ENCODE measurements at regions of chr1 and their contacts with region 1.

Region 1: GRCh38 chr1:28248283-28249012 is 10.9 kb upstream of the SESN2 start:
- DNase-seq: peak; percentile 80
- ATAC-seq: peak; percentile 53
- H3K4me3 ChIP-seq: peak overlapping the region; percentile 16; the same call in 1 of the 2 replicates
- H3K27ac ChIP-seq: peak overlapping the region; percentile 68; the same call in 1 of the 2 replicates
- H3K4me1 ChIP-seq: peaks cover 14% of the 10 kb centered on the region
- H3K27me3 ChIP-seq: no peaks in the 10 kb centered on the region; the same call in 1 of the 2 replicates
- CTCF ChIP-seq: peak; percentile 90
- POLR2A ChIP-seq: no peak
- RAD21 ChIP-seq: peak; percentile 88

Region 2: DNA sequence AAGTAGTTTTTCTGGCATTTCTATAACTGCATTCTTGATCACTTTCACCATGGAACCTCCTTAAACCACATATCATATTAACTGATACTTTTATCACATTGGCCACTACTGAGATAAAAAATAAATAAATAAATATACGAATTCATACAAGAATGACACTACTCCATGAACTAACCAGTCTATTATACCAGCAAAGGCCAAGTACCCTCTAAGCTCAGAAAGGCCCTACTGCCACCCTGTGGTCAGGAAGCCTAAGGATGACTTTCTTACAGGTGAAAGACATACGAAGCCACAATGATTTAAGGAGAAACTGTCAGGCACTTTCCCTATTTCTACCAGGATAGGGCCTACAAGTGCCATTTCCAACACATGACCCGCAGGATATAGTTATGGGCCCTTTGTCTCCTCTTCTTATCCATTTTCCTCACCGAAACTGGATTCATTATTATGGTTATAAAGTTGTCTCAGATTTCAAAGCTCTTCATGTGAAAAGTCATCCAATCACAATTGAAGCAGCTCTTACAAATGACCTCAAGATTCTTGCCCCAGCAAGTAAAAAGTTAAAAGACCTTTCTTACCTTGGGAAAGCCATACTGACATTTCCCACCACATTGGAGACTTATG is 39.5 kb before region 1 on chr1:
- CTCF ChIA-PET with region 1: no interaction called
- POLR2A ChIA-PET with region 1: no interaction called
- dilution Hi-C with region 1: no loop called
- in situ Hi-C with region 1: no loop called
- intact Hi-C with region 1: no loop called
- DNase-seq: peak; percentile 76
- ATAC-seq: peak; percentile 97
- H3K4me3 ChIP-seq: no peak overlapping the region
- H3K27ac ChIP-seq: no peak overlapping the region
- H3K4me1 ChIP-seq: no peaks in the 10 kb centered on the region
- H3K27me3 ChIP-seq: no peaks in the 10 kb centered on the region
- CTCF ChIP-seq: peak; percentile 84
- POLR2A ChIP-seq: no peak
- RAD21 ChIP-seq: peak; percentile 97

Region 3: DNA sequence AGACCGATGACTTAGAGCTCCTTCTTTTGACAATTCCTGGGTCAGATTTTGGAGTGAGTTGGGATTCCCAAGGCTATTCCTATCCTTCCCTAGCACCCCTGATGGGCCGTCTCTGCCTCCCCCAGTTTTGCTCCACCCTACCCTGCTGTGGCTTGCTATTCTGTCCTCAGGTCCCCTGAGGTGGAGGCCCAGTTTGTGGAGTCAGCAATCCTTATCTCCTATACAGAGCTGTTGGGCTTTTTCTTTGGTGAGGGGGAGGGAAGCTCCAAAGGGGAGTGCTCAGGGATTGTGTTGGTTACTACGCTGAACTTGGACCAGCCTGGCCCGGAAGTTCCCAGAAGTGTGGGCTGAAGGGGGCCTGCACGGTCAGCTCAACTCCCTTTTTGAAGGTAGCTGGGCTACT is 18.5 kb after region 1 on chr1:
- CTCF ChIA-PET with region 1: interaction called, 14 read pairs
- POLR2A ChIA-PET with region 1: no interaction called
- dilution Hi-C with region 1: no loop called
- in situ Hi-C with region 1: no loop called
- intact Hi-C with region 1: no loop called
- DNase-seq: no peak
- ATAC-seq: no peak
- H3K4me3 ChIP-seq: no peak overlapping the region
- H3K27ac ChIP-seq: no peak overlapping the region
- H3K4me1 ChIP-seq: peaks cover 16% of the 10 kb centered on the region
- H3K27me3 ChIP-seq: no peaks in the 10 kb centered on the region
- CTCF ChIP-seq: no peak
- POLR2A ChIP-seq: no peak
- RAD21 ChIP-seq: no peak

Region 4: DNA sequence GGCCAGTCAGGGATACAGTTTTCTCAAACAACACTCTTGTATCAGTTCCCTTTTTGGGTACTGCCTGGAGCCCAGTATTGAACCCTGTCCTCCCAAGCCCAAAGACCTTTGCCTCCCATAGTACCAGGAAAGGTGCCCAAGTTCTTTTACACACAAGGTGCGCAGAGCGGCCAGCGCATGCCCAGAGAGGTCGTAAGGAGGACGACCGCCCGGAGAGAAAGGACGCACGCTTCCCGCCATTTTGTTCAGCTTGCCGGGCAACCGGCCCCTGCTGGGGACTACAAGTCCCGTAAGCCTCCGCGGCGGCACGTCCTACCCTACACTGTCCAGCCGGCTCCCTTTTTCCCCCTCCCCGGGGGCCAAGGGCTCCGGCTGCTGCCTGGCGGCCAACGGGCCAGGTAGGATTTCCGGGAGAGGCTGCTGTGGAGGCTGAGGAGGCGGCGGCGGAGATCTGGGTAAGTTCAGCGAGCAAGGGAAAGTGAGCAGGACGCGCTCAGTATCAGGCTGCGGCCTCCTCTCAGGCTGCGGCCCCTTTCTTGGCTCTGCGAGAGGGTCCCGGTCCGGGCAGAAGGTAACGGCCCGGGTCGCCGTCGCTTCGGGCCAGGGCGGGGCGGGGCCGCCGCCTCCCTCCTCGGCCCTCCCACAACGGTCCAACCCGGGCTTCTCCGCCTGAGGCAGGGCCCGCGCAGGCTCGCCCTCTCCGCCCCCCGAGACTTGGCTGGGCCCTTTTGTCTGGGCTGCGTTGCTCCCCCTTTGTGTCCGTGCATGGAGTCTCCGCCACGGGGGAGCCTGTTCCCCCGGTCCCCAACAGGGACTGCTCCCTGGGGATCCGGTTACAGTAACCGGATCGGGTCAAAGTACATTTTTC is 121.2 kb after region 1 on chr1 and contains the start of gene PHACTR4:
- CTCF ChIA-PET with region 1: no interaction called
- POLR2A ChIA-PET with region 1: no interaction called
- dilution Hi-C with region 1: no loop called
- in situ Hi-C with region 1: no loop called
- intact Hi-C with region 1: loop called (anchors 2 kb)
- DNase-seq: peak; percentile 91
- ATAC-seq: peak; percentile 95
- H3K4me3 ChIP-seq: peak within 1 kb of the TSS; percentile 66
- H3K27ac ChIP-seq: peak within 1 kb of the TSS; percentile 93
- H3K4me1 ChIP-seq: 0 out of 2 replicates have a peak, but pooled peaks cover 5% of the 10 kb centered on the region
- H3K27me3 ChIP-seq: no peaks in the 10 kb centered on the region
- CTCF ChIP-seq: no peak
- POLR2A ChIP-seq: peak; percentile 76; the same call in 1 of the 2 replicates
- RAD21 ChIP-seq: no peak
- total RNA-seq, gene PHACTR4: 6.9 and 7.5 TPM in 2 replicates

Region 5: DNA sequence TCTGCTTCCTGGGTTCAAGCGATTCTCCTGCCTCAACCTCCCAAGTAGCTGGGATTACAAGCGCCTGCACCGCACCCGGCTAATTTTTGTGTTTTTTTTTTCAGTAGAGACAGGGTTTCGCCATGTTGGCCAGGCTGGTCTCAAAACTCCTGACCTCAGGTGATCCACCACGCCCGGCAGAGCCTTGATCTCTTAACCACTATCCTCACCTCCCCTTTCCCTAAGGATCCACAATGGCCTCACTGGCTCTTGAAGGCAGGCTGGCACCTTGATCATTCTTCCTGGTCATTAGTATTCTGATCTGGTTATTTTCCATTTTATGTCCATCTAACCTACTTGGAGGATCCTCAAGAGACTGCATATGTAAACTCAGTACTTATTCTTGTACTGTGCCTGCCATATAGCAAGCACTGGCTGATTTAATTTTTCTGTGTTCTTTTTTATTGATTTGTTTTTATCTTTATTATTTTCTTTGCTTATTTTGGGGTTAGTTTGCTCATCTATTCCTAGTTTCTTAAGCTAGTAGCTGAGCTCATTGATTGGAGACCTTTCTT is 263.7 kb after region 1 on chr1:
- CTCF ChIA-PET with region 1: interaction called, 4 read pairs
- POLR2A ChIA-PET with region 1: interaction called, 10 read pairs
- dilution Hi-C with region 1: no loop called
- in situ Hi-C with region 1: no loop called
- intact Hi-C with region 1: no loop called
- DNase-seq: peak; percentile 37
- ATAC-seq: no peak
- H3K4me3 ChIP-seq: no peak overlapping the region
- H3K27ac ChIP-seq: no peak overlapping the region
- H3K4me1 ChIP-seq: peaks cover 13% of the 10 kb centered on the region
- H3K27me3 ChIP-seq: no peaks in the 10 kb centered on the region
- CTCF ChIP-seq: no peak
- POLR2A ChIP-seq: peak; percentile 1; the same call in 1 of the 2 replicates
- RAD21 ChIP-seq: no peak

Region 6: GRCh38 chr1:28703629-28704028 is 455.2 kb after region 1 on chr1:
- CTCF ChIA-PET with region 1: no interaction called
- POLR2A ChIA-PET with region 1: no interaction called
- dilution Hi-C with region 1: no loop called
- in situ Hi-C with region 1: no loop called
- intact Hi-C with region 1: no loop called
- DNase-seq: no peak
- ATAC-seq: no peak
- H3K4me3 ChIP-seq: no peak overlapping the region
- H3K27ac ChIP-seq: no peak overlapping the region
- H3K4me1 ChIP-seq: no peaks in the 10 kb centered on the region
- H3K27me3 ChIP-seq: no peaks in the 10 kb centered on the region
- CTCF ChIP-seq: no peak
- POLR2A ChIP-seq: no peak
- RAD21 ChIP-seq: no peak